Calu3 (cell line): ENCODE measurements at regions of chr13 and their contacts with region 1.

Region 1: DNA sequence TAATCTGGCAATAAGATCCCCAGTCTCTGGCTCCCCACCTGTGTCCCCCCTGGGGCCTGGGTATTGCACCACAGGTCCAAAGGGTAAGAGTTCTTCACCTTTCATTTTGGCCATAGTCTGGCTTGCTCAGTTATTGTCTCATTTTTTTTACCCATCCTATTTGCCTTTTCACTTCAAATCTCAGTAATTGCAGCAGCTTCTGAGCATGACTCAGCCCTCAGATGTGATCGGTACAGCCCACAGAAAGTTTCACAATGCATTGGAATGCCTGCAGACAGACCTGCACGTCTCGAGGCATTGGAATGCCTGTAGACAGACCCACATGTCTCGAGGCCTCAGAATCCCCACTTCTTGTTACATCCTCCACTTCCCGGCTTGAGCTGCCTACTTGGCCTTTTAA is 173.6 kb downstream of the NUFIP1 start:
- DNase-seq: peak; percentile 65
- H3K4me3 Mint-ChIP-seq: no peak overlapping the region
- H3K27ac Mint-ChIP-seq: peak overlapping the region; percentile 11
- H3K4me1 Mint-ChIP-seq: peaks cover 71% of the 10 kb centered on the region
- H3K27me3 Mint-ChIP-seq: no peaks in the 10 kb centered on the region
- CTCF ChIP-seq: no peak

Region 2: DNA sequence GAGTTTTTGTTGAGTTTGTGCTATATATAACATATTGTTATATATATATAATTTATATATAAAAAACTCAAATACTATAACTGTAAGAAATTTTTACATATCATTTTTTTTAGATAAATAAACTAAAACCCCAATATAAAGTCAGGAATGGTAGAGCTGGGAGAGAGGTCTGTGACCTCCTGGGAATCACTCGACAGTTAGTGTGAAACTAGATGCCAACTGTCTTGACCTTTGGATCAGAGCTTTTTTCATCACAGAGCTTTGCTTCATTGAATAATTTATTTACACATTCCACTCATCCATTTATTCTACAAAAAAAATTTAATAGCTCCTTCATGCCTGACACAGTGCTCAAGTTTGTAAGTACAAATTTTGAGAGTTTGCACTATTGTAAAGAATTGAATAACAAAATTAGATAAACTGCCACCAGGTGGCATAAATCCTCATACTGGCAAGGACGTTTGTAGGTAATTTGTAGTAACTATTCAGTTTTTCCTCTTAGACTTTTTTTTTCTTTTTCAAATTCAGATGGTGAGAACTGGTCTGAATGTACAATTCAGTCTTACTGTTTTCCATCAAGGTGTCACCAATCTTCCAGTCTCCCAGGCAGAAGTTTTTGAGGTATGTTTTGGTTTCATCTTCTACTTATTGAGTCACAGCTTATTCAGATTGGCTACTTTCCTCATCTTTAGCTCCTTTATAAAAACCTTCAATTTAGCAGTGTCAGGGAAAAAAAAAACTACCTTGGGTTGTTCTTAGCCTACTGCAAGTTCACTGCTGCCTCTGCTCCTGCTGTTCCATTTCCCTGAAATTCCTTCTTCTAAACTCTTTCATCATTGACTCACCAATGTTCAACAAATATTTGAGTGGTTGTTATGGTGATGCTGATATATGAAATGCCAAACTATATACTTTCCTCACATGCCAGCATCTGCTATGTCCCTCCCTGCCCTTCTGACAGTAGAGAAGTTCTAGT is 907.2 kb before region 1 on chr13:
- CTCF ChIA-PET with region 1: no interaction called
- intact Hi-C with region 1: no loop called
- DNase-seq: peak; percentile 8
- H3K4me3 Mint-ChIP-seq: no peak overlapping the region
- H3K27ac Mint-ChIP-seq: peak overlapping the region; percentile 83
- H3K4me1 Mint-ChIP-seq: peaks cover 18% of the 10 kb centered on the region
- H3K27me3 Mint-ChIP-seq: no peaks in the 10 kb centered on the region
- CTCF ChIP-seq: peak; percentile 44

Region 3: GRCh38 chr13:44516771-44517170 is 298.9 kb before region 1 on chr13:
- CTCF ChIA-PET with region 1: no interaction called
- intact Hi-C with region 1: no loop called
- DNase-seq: no peak
- H3K4me3 Mint-ChIP-seq: no peak overlapping the region
- H3K27ac Mint-ChIP-seq: no peak overlapping the region
- H3K4me1 Mint-ChIP-seq: no peaks in the 10 kb centered on the region
- H3K27me3 Mint-ChIP-seq: no peaks in the 10 kb centered on the region
- CTCF ChIP-seq: no peak

Region 4: GRCh38 chr13:44710576-44710975 is 105.0 kb before region 1 on chr13:
- CTCF ChIA-PET with region 1: no interaction called
- intact Hi-C with region 1: loop called (anchors 10 kb)
- DNase-seq: peak; percentile 23
- H3K4me3 Mint-ChIP-seq: no peak overlapping the region
- H3K27ac Mint-ChIP-seq: peak overlapping the region; percentile 56
- H3K4me1 Mint-ChIP-seq: peaks cover 10% of the 10 kb centered on the region
- H3K27me3 Mint-ChIP-seq: no peaks in the 10 kb centered on the region
- CTCF ChIP-seq: no peak

Region 5: DNA sequence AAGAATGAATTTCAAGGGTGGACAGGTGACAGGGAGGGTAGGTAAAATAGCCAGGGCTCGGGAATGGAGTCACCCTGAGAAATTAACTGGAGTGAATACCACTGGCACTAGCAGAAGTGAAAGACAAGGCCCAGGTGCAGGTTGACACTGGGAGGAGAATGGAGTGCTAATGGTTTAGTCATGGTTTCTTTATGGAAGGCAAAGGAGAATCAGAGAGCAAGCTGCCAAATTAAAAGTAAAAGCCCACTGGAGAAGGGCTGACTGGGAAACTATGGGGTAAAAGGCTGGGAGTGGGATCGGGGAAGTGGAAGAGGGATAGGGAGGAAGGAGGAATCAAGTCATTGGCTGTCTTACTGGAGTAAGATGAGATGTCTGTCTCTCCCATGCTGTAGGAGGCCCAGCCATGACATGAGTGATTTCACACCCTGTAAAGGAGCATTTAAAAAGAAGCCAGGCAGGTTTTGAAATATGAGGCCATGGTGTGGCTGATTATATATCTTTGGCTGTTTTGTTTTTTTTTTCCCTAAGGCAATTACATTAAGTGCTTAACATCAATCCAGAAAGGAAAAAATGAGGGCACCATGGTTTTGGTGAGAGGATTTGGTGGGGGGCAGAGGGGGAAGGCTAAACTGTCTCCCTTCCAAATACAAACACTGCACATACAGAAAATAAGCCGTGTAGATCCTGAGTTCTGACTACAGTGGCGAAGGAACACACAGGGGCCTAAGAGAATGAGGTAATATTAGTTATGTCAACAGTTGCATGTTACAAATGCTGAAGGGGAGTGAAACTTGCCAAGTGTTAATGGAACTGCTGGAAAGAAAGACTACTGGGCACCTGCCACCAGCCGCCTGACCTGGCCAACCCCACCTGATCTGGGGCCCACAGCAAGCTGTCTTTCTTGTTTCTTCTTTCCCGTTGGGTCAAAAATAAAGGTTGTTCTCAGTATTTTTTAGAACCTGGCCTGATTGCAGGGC is 56.0 kb before region 1 on chr13:
- CTCF ChIA-PET with region 1: interaction called, 6 read pairs
- intact Hi-C with region 1: loop called (anchors 10 kb)
- DNase-seq: peak; percentile 9
- H3K4me3 Mint-ChIP-seq: peak overlapping the region; percentile 57
- H3K27ac Mint-ChIP-seq: peak overlapping the region; percentile 87
- H3K4me1 Mint-ChIP-seq: peaks cover 69% of the 10 kb centered on the region
- H3K27me3 Mint-ChIP-seq: no peaks in the 10 kb centered on the region
- CTCF ChIP-seq: no peak

Region 6: GRCh38 chr13:44786756-44787155 is 28.9 kb before region 1 on chr13:
- CTCF ChIA-PET with region 1: no interaction called
- intact Hi-C with region 1: no loop called
- DNase-seq: no peak
- H3K4me3 Mint-ChIP-seq: no peak overlapping the region
- H3K27ac Mint-ChIP-seq: no peak overlapping the region
- H3K4me1 Mint-ChIP-seq: no peaks in the 10 kb centered on the region
- H3K27me3 Mint-ChIP-seq: no peaks in the 10 kb centered on the region
- CTCF ChIP-seq: no peak

Region 7: DNA sequence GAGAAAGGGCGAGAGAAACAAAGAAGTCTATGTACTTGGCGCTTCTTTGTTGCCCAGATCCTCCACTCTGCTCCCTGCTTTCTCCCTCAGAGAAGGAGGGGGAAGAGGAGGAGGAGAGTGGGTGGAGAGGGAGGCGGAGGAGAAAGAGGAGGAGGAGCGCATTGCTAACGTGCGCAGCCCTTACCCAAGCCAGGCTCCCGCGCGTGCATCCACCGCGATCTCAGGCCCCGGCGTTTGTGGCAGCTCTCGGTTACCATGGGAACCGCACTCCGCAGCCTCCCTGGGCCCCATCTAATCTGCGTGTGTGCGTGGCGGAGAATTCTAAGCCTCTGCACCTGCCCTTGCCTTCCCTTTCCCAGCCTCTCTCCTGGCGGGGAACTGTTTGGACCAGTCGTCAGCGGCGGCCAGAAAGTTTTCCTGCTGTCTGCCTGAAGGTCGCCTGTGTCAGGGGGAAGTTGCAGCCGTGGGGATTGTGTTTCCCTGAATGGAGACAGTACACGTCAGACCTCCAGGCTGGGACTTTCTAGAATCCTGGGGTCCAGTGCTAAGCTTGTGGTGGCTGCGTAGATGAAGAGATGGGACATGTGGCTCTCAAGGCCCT is 800.0 kb after region 1 on chr13 and contains the start of gene ERICH6B:
- CTCF ChIA-PET with region 1: no interaction called
- intact Hi-C with region 1: no loop called
- DNase-seq: no peak
- H3K4me3 Mint-ChIP-seq: no peak within 1 kb of the TSS
- H3K27ac Mint-ChIP-seq: no peak within 1 kb of the TSS
- H3K4me1 Mint-ChIP-seq: no peaks in the 10 kb centered on the region
- H3K27me3 Mint-ChIP-seq: peaks cover 100% of the 10 kb centered on the region
- CTCF ChIP-seq: no peak
- total RNA-seq, gene ERICH6B: not detected in 2 replicates